ENCODE measurements at regions of chr12 and their contacts with region 1.

Region 1: GRCh38 chr12:39443081-39443928 is at the start of gene KIF21A:
- DNase-seq: peak; percentile 75
- ATAC-seq: peak; percentile 95
- H3K4me3 ChIP-seq: peak within 1 kb of the TSS in 4 of 5 experiments; percentile 26 to 61 (median 50)
- H3K4me3 Mint-ChIP-seq: peak within 1 kb of the TSS; percentile 88
- H3K27ac ChIP-seq: peak within 1 kb of the TSS in 1 of 2 donors; percentile 41
- H3K27ac Mint-ChIP-seq: peak within 1 kb of the TSS; percentile 73
- H3K4me1 ChIP-seq: peaks cover 11 to 14% of the 10 kb centered on the region in 2 donors
- H3K4me1 Mint-ChIP-seq: peaks cover 14% of the 10 kb centered on the region
- H3K27me3 ChIP-seq: peaks cover 0 to 8% (median 3%) of the 10 kb centered on the region in 4 experiments
- H3K27me3 Mint-ChIP-seq: peaks cover 46% of the 10 kb centered on the region
- CTCF ChIP-seq: peak; percentile 46
- total RNA-seq, gene KIF21A: 2.2 and 3.8 TPM in 2 replicates

Region 2: GRCh38 chr12:39375206-39375808 is 68.0 kb before region 1 on chr12:
- CTCF ChIA-PET with region 1: no interaction called
- POLR2A ChIA-PET with region 1: no interaction called
- intact Hi-C with region 1: no loop called
- DNase-seq: no peak
- ATAC-seq: no peak
- H3K4me3 ChIP-seq: no peak overlapping the region
- H3K4me3 Mint-ChIP-seq: no peak overlapping the region
- H3K27ac ChIP-seq: no peak overlapping the region
- H3K27ac Mint-ChIP-seq: no peak overlapping the region
- H3K4me1 ChIP-seq: no peaks in the 10 kb centered on the region
- H3K4me1 Mint-ChIP-seq: peaks cover 5% of the 10 kb centered on the region
- H3K27me3 ChIP-seq: no peaks in the 10 kb centered on the region
- H3K27me3 Mint-ChIP-seq: no peaks in the 10 kb centered on the region
- CTCF ChIP-seq: no peak

Region 3: DNA sequence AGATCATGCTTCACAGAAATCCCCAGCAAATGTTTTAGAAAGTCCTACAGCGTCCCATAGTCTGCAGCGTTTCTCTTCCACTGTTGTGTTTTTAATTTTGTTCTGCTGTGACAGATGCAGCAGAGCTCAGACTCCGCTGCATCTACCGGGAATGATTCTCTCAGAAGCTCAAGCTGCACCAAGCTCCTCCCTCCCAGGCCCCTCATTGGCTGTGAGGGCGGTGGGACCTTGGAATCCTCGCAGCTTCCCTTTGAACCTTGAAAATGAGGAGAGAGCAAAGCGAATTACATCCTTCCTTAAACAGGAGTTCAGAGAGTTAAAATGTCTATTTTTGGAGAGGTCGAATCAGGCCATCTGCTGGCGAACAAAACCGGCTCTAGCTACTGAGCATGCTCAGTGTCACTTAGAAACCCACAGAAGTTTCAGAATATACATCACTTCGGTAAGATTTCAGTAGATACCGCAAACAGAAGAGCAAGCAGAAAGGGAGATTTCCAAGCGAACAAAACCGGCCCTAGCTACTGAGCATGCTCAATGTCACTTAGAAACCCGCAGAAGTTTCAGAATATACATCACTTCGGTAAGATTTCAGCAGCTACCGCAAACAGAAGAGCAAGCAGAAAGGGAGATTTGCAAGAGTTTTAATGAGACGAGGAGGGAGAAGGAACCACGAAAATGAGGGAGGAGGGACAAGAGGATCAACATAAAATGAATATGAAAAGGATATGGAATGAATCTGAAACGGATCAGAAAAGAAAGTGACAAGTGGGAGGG is 176.5 kb after region 1 on chr12 and contains the start of gene ABCD2:
- CTCF ChIA-PET with region 1: no interaction called
- POLR2A ChIA-PET with region 1: no interaction called
- intact Hi-C with region 1: loop called (anchors 2 kb)
- DNase-seq: peak; percentile 89
- ATAC-seq: peak; percentile 85
- H3K4me3 ChIP-seq: peak within 1 kb of the TSS; percentile 54 to 78 (median 74)
- H3K4me3 Mint-ChIP-seq: no peak within 1 kb of the TSS
- H3K27ac ChIP-seq: peak within 1 kb of the TSS; percentile 87 to 88
- H3K27ac Mint-ChIP-seq: no peak within 1 kb of the TSS
- H3K4me1 ChIP-seq: peaks cover 27 to 29% of the 10 kb centered on the region in 2 donors
- H3K4me1 Mint-ChIP-seq: peaks cover 28% of the 10 kb centered on the region
- H3K27me3 ChIP-seq: no peaks in the 10 kb centered on the region
- H3K27me3 Mint-ChIP-seq: no peaks in the 10 kb centered on the region
- CTCF ChIP-seq: no peak
- total RNA-seq, gene ABCD2: 1.5 and 1.8 TPM in 2 replicates